ENCODE measurements at regions of chrX and their contacts with region 1.

Region 1: GRCh38 chrX:153667956-153668396 is 5.6 kb downstream of the PNCK start:
- DNase-seq: peak; percentile 83

Region 2: DNA sequence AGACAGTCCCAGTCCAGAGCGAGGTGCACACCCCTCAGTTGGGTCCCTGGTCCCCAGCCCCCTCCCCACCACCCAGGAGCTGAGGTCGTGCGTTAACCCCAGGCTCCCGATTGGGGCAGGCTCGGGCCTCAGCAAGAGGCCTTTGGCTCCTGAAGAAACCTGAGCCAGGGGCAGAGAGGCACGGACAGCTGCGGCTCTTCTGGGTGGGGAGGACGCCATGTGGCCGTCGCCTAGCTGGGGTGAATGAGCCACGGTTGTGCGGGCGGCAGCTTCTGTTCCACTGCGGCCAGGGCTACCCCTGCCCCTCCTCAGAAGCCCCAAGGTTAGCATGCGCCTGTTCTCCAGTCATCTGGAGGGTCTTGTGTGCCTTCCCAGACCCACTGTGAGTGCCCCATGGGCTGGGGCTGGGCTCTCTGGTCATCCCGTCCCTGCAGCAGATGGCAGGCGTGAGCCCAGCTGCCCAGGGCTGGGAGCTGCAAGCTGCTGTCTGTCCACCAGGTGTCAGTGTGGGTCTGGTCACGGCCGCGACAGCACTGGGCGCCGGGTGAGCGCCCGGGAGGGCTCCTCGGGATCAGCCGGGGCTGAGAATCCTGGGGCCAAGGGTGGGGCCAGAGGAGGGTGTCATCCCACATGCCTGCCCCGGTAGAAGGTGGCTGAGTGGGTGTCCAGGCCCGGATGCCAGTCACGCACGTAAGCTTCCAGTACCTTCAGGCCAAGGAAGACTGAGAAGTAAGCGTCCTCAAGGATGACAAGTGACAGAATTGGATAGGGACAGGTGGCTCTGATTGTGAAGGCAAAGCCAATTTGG is 128.6 kb before region 1 on chrX:
- CTCF ChIA-PET with region 1: interaction called, 37 read pairs
- POLR2A ChIA-PET with region 1: no interaction called
- DNase-seq: peak; percentile 89

Region 3: DNA sequence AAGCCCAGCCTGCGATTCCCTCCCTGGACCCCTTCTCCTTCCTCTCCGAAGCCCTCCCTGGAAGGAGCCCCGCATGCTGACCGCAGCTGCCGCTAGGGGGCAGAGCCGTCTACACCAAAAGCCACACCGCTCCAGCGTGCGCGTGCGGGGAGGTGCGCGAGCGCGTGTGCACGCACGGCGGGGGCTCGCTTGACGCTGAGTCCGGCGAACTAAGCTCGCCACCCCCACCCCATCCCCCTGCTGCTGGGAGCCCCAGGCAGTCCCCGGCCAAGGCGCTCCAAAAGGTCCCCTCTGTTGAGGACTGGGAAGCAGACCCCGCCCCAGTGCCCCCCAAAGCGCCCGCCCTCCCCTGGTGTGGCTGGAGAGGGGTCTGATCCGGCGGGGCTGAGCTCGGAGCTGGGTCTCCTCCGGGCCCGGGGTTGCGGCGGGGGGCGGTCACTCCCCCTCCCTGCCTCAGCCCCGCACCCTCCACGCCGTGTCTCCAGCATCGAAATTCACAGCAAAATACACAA is 58.0 kb before region 1 on chrX:
- CTCF ChIA-PET with region 1: interaction called, 21 read pairs
- POLR2A ChIA-PET with region 1: interaction called, 3 read pairs
- DNase-seq: peak; percentile 88

Region 4: GRCh38 chrX:153643431-153644351 is 24.3 kb before region 1 on chrX:
- CTCF ChIA-PET with region 1: interaction called, 17 read pairs
- POLR2A ChIA-PET with region 1: interaction called, 6 read pairs
- DNase-seq: peak; percentile 65

Region 5: DNA sequence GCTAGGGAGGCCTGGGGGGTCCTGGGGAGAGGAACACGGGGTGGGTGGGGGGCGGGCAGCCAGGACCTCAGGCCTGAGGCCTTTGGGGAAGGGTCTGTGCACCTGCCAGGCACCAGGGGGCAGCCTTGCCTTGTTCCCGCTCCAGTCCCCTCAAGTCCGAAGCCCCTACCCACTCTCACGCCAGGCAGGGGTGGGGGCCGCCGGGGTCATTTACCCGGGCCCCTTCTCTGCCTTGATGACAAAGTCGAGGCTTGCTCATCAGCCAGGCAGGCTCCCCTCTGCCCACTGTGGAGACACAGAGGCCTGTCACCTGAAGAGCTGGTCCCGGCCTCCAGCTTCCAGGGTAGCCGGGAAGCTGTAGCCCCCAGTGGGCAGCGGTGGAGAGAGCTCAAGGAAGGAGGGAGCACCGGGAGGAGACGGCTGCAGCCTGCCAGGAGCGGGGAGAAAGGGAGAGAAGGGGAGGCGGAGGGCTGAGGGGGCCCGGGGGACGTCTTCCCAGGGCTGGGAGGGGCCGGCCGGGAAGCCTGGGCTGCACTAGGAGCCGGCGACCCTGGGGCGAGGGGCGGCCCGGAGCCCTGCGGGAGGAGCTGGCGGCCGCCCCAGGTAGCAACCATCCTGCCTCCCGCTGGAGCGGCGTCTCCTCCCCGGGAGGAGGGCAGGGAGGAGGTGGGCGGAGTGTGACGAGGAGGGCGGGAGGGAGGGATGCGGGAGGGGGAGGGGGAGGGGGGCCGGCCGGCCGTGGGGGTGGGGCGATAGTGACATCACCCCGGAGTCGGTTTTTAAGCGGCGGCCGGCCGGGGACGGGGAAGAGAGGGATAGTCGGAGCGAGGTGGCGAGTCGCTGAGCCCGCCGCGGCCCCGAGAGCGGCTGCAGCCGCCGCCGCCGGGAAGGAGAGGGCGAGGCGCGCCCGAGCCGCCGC is 19.4 kb after region 1 on chrX and contains the start of gene SLC6A8:
- CTCF ChIA-PET with region 1: interaction called, 13 read pairs
- POLR2A ChIA-PET with region 1: no interaction called
- DNase-seq: peak; percentile 75

Region 6: GRCh38 chrX:153782313-153782712 is 114.3 kb after region 1 on chrX:
- CTCF ChIA-PET with region 1: no interaction called
- POLR2A ChIA-PET with region 1: no interaction called
- DNase-seq: no peak

Region 7: GRCh38 chrX:153951683-153952372 is 283.9 kb after region 1 on chrX:
- CTCF ChIA-PET with region 1: no interaction called
- POLR2A ChIA-PET with region 1: no interaction called
- DNase-seq: no peak

Region 8: DNA sequence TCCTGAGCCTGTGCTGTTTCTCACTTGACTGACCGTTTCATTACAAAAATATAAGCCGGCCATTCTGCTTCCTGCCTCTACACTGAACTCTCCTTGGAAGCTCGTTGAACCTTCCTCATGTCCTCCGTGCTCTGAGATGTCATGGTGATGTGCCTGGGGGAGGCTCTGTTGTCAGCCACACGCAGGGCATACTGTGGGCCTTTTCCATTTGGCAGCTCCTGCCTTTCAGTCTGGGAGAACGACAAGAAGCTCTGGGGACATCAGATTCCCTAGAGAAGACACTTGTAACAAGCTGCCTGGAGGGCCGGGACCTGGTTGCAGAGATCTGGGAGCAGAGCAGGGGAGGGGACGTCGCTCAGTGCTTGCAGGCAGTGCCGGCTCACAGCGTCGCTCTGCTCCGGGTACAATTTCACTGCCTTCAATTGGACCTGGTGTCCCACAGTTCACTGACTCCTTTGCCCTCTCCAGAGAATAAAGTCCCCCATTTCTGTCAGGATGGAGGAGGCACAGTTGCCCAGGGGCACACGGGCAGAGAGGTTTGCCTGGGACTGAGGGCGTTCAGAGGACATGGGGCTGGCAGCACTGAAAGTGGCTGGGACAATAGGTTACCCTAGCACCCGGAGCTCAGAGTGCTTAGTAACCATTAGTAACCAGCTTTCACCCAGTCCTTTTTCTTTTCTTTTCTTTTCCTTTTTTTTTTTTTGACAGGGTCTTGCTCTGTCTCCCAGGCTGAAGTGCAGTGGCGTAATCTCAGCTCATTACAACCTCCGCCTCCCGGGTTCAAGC is 448.6 kb after region 1 on chrX:
- CTCF ChIA-PET with region 1: no interaction called
- POLR2A ChIA-PET with region 1: no interaction called
- DNase-seq: no peak

Measured in HEK293T (cell line).